ENCODE measurements at regions of chr11 and their contacts with region 1.

Region 1: DNA sequence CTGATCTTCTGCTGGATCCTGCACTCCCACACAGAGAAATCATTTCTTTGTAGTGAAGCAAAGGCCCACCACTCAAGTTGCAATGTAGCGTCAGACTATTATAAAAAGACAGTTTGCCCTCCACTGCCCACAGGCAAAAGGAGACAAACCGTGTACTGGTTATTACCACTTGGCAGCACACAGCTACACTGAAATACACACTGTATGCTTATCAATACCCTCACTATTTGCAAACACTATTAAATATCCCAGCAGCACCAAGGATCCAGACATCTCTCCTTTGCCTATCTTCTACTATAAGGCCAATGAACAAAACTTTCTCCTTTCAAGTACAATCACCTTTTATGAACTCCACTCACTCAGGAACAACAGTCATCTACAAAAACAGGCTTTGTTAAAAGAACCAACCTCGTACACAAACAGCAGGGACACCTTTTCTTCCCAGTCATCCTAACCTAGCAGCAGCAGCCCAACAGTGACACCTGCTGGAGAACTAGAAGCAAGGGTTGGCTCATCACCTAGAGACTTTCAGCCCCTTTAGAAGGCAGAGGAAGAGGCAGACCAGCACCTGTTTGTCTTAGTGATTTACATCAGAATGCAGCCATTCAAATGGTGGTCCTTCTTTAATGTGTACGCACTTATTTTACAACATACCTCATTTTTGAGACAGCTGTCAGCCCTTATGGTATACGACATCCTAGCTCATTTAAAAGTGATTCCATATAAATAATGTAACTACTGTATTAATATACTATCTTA is 56.1 kb downstream of the AMBRA1 start:
- DNase-seq: no peak
- ATAC-seq: peak; percentile 82
- H3K4me3 ChIP-seq: no peak overlapping the region
- H3K27ac ChIP-seq: no peak overlapping the region
- H3K4me1 ChIP-seq: peaks cover 11% of the 10 kb centered on the region
- H3K27me3 ChIP-seq: no peaks in the 10 kb centered on the region
- CTCF ChIP-seq: peak; percentile 88

Region 2: DNA sequence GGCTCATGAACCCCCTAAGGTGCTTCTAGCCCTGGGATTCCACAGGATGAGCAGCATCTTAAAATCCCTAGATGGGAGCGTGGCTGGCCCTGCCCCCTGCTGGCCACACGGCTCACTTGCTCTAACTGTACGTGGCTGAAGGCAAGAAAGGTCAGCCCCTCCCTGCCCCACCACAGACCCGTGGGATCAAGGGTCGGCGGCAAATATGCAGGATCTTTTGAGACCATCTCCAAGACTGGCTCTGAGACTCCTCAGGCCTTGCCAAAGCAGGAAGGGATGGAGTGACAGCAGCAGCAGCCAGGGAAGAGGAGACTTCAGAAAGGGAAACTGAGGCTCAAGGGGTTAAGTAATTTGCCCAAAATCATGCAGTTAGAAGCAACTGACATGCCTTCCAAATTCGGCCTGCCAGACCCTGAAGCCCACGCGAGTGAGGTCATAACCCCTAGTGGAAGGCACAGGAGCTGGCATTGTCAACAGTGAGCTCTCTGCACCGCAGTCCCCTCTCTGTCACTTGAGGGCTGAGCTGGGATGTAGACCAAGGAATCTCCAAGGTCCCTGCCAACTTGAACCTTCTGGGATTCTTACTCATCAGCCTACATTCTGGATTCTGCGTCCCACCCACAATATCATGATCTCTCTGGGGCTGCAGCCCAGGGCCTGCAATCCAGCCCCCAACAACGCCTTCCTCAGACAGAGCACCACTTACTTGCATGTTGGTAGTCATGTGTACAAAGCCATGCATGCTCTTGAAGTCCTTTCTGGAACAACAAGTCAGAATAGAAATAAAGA is 228.9 kb before region 1 on chr11:
- intact Hi-C with region 1: no loop called
- DNase-seq: peak; percentile 86
- ATAC-seq: peak; percentile 86
- H3K4me3 ChIP-seq: no peak overlapping the region
- H3K27ac ChIP-seq: no peak overlapping the region
- H3K4me1 ChIP-seq: no peaks in the 10 kb centered on the region
- H3K27me3 ChIP-seq: no peaks in the 10 kb centered on the region
- CTCF ChIP-seq: peak; percentile 89

Region 3: DNA sequence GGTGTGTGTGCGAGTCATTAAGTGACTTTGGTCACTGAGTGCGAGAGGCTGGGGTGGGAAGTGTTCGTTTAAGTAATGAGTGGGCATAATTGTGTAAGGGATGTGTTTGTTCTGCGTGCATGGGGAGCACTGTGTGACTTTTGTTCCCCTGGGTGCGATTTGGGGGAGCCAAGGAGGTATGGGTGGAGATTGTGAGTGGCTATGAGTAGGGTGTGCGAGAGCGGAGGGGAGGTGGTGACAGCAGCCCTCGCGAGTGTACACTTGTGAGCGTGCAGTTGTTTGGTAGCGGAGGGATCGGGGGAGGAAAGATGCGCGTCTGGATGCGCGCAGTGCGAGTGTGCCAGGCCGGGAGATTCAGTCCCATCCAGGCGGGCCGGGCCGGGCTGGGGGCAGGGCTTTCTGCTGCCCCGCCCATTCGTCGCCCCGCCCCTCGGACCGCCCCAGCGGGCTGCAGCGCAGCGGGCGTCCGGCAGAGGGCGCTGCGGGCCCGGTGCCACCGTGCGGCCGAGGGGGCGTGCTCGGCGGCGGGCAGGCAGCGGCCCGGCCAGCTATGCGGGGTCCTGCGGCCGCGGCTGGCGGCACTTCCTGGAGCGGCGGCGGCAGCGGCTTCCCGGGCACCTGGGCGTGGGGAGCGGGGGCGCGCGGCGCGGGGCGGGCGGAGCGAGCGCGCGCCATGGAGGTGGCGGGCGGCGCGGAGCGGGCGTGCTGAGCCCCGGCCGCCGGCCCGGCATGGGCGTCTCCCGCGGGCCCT is 190.7 kb before region 1 on chr11 and contains the start of gene DGKZ:
- intact Hi-C with region 1: no loop called
- DNase-seq: peak; percentile 95
- ATAC-seq: peak; percentile 95
- H3K4me3 ChIP-seq: peak within 1 kb of the TSS; percentile 75
- H3K27ac ChIP-seq: peak within 1 kb of the TSS; percentile 68
- H3K4me1 ChIP-seq: peaks cover 54% of the 10 kb centered on the region
- H3K27me3 ChIP-seq: no peaks in the 10 kb centered on the region
- CTCF ChIP-seq: peak; percentile 63
- total RNA-seq, gene DGKZ: 50.4 TPM

Region 4: GRCh38 chr11:46392421-46393230 is 145.1 kb before region 1 on chr11:
- intact Hi-C with region 1: loop called (anchors 10 kb)
- DNase-seq: peak; percentile 93
- ATAC-seq: peak; percentile 92
- H3K4me3 ChIP-seq: peak overlapping the region; percentile 37
- H3K27ac ChIP-seq: no peak overlapping the region
- H3K4me1 ChIP-seq: peaks cover 23% of the 10 kb centered on the region
- H3K27me3 ChIP-seq: peaks cover 45% of the 10 kb centered on the region
- CTCF ChIP-seq: no peak

Region 5: DNA sequence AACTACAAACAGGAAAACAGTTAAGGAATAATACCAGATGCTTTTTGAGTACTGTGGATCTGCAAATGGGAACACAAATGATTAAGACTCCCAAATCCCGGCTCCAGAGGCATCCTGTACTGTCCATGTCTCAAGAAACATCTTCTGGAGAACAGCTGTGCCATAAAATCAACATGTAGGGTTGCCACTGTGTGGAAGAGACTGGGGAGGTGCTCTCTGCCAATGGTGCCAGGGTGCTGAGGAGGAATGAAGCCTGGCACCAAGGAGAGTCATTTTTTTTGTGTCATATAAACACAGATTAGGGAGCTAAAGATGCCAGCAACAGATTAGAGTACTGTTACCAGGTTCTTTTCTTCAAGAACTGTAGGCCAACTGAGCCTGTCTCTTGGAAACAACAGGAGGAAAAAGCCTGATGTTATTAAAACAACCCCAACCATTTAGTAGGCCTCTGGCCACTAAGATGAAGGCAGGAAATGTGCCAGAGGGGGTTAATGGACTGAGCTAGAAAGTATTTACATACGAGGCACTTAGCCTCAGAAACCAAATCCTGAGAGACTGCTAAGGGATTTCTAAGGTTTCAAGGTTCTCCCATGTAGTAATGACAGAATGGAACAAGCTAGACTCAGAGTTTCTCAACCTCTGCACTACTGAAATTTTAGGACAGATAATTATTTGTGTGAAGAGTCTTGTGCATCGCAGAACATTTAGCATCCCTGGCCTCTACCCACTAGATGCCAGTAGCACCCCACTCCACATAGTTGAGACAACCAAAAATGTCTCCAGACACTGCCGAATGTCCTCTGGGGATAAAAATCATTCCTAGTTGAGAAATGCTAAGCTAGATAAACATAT is 91.6 kb before region 1 on chr11:
- intact Hi-C with region 1: loop called (anchors 10 kb)
- DNase-seq: no peak
- ATAC-seq: peak; percentile 59
- H3K4me3 ChIP-seq: no peak overlapping the region
- H3K27ac ChIP-seq: no peak overlapping the region
- H3K4me1 ChIP-seq: peaks cover 9% of the 10 kb centered on the region
- H3K27me3 ChIP-seq: no peaks in the 10 kb centered on the region
- CTCF ChIP-seq: peak; percentile 8

Region 6: GRCh38 chr11:47047972-47048371 is 510.3 kb after region 1 on chr11:
- intact Hi-C with region 1: no loop called
- DNase-seq: no peak
- ATAC-seq: no peak
- H3K4me3 ChIP-seq: no peak overlapping the region
- H3K27ac ChIP-seq: no peak overlapping the region
- H3K4me1 ChIP-seq: no peaks in the 10 kb centered on the region
- H3K27me3 ChIP-seq: no peaks in the 10 kb centered on the region
- CTCF ChIP-seq: no peak